Mucosa of descending colon (tissue), 3 donors: ENCODE measurements at regions of chr2 and their contacts with region 1.

Region 1: DNA sequence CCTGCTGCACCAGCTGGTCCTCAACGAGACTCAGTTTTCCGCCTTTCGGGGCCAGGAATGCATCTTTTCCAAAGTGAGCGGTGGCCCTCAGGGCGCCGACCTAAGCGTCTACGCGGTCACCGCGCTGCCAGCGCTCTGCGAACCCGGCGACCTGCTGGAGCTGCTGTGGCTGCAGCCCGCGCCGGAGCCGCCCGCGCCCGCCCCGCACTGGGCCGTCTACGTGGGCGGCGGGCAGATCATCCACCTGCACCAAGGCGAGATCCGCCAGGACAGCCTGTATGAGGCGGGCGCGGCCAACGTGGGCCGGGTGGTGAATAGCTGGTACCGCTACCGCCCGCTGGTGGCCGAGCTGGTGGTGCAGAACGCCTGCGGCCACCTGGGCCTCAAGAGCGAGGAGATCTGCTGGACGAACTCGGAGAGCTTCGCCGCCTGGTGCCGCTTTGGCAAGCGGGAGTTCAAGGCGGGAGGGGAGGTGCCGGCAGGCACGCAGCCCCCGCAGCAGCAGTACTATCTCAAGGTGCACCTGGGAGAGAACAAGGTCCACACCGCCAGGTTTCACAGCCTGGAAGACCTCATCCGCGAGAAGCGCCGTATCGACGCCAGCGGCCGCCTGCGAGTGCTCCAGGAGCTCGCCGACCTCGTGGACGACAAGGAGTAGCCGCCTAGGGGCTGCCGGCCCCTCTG is 1.8 kb downstream of the LRATD1 start:
- DNase-seq: peak; percentile 89 to 94 (median 91)
- ATAC-seq: peak; percentile 74
- H3K4me3 ChIP-seq: peak overlapping the region; percentile 67
- H3K4me1 ChIP-seq: peaks cover 7% of the 10 kb centered on the region
- CTCF ChIP-seq: peak; percentile 66

Region 2: GRCh38 chr2:14428056-14428455 is 206.3 kb before region 1 on chr2:
- intact Hi-C with region 1: loop called in 1 of 2 experiments (anchors 10 kb)
- DNase-seq: peak in 1 of 3 donors; percentile 67
- ATAC-seq: peak; percentile 22
- H3K4me3 ChIP-seq: no peak overlapping the region
- H3K4me1 ChIP-seq: peaks cover 8% of the 10 kb centered on the region
- CTCF ChIP-seq: no peak

Region 3: DNA sequence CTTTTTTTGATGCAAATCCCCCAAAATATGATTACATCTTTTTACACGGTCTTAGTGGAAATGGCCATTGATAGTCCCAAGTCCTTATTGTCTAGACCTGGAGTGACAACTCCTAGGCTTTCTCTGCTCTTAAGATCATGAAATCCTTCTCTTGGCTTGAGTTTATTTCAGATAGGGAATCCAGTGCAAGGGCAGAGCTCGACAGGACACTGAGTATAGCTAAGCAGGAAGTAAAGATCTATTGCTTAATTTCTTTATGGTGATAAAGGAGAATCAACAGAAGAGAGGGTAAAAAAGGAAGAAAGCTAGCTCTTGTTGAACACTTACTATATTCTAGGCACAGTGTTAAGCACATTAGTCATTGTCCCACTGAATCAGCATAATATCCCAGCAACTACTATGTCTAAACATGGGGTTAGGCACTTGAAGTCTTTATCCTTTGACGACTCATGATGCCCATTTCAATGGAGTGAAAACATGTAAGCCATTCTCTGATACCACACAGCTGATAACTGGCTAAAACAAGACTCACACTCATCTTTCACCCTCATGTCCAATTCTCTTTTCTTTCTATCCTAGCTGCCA is 75.9 kb before region 1 on chr2:
- intact Hi-C with region 1: loop called in 1 of 2 experiments (anchors 10 kb)
- DNase-seq: no peak
- ATAC-seq: peak; percentile 77
- H3K4me3 ChIP-seq: no peak overlapping the region
- H3K4me1 ChIP-seq: peaks cover 29% of the 10 kb centered on the region
- CTCF ChIP-seq: no peak

Region 4: GRCh38 chr2:14684516-14684915 is 50.2 kb after region 1 on chr2:
- intact Hi-C with region 1: no loop called
- DNase-seq: no peak
- ATAC-seq: no peak
- H3K4me3 ChIP-seq: no peak overlapping the region
- H3K4me1 ChIP-seq: no peaks in the 10 kb centered on the region
- CTCF ChIP-seq: no peak

Region 5: GRCh38 chr2:14927041-14927452 is 292.7 kb after region 1 on chr2:
- intact Hi-C with region 1: no loop called
- DNase-seq: no peak
- ATAC-seq: no peak
- H3K4me3 ChIP-seq: no peak overlapping the region
- H3K4me1 ChIP-seq: no peaks in the 10 kb centered on the region
- CTCF ChIP-seq: no peak